PC-9 (cell line): ENCODE measurements at regions of chr3 and their contacts with region 1.

Region 1: DNA sequence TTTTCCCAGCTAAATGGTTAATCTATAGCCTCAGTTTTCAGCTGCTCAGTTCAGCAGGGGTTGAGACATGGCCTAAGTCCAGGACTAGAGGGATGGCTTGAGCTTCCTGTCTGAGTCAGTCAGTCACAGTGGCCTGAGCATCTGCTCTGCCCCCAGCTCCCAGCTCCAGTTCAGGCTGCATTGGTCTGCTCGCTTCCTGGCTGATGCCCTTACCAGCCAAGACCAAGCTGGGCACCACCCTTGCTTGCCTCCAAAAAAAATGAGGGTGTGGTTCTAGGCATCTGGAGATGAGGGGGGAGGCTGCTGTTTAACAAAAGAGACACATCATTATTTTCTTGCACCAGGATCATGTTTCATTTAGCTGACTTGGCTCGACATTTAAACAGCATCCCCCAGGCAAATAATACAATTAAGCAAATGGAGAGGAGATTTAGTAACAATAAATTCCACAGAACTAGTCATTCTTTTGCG is 70.7 kb downstream of the WNT5A start:
- DNase-seq: peak; percentile 81 to 93
- H3K4me3 ChIP-seq: no peak overlapping the region
- H3K27ac ChIP-seq: peak overlapping the region; percentile 54
- H3K4me1 ChIP-seq: peaks cover 20% of the 10 kb centered on the region
- H3K27me3 ChIP-seq: no peaks in the 10 kb centered on the region
- CTCF ChIP-seq: no peak

Region 2: GRCh38 chr3:54891548-54892120 is 524.8 kb before region 1 on chr3:
- CTCF ChIA-PET with region 1: no interaction called
- POLR2A ChIA-PET with region 1: interaction called, 5 read pairs
- intact Hi-C with region 1: loop called (anchors 2 kb)
- DNase-seq: peak; percentile 91 to 97
- H3K4me3 ChIP-seq: no peak overlapping the region; the same call in 1 of the 2 replicates
- H3K27ac ChIP-seq: peak overlapping the region; percentile 69
- H3K4me1 ChIP-seq: peaks cover 25% of the 10 kb centered on the region
- H3K27me3 ChIP-seq: no peaks in the 10 kb centered on the region
- CTCF ChIP-seq: peak; percentile 48

Region 3: DNA sequence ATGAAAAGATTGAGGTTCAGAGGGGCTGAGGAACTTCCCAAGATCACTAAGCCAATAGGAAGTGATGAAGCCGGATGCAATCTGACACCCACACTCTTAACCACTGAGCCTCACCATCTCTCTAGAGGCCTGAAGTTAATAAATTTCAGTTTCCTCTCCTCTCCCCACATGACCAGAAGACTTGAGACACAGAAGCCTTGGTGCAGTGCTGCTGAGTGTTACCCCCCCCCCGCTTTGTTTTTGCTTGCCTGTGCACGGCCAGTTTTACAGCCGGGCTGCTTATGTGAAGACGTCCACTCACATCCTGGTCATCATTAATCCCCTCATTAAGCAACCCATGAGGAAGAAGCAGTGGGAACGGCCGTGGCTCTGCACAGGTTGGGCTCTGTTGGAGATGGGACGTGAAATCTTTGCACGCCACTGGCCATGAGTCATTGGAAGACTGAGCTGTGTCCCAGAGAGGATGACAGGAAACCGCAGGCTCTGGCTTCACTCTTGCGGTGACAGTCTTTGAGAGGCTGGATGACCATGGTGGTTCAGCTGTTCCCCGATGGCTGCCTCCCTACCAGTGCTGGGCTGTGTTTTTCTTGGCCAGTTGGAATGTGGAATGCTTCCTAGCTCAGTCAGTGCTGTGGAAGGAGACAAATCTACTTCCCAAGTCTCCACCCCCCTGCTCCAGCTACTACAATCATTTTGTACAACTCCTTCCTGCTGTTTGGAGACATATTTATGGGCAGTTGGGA is 256.0 kb before region 1 on chr3:
- CTCF ChIA-PET with region 1: no interaction called
- POLR2A ChIA-PET with region 1: no interaction called
- intact Hi-C with region 1: loop called (anchors 1 kb)
- DNase-seq: peak; percentile 81 to 87
- H3K4me3 ChIP-seq: 0 out of 2 replicates have a peak overlapping the region, but pooled peaks have one; percentile 7
- H3K27ac ChIP-seq: peak overlapping the region; percentile 57
- H3K4me1 ChIP-seq: peaks cover 15% of the 10 kb centered on the region
- H3K27me3 ChIP-seq: no peaks in the 10 kb centered on the region
- CTCF ChIP-seq: no peak